ENCODE measurements at regions of chr1 and their contacts with region 1.

Region 1: DNA sequence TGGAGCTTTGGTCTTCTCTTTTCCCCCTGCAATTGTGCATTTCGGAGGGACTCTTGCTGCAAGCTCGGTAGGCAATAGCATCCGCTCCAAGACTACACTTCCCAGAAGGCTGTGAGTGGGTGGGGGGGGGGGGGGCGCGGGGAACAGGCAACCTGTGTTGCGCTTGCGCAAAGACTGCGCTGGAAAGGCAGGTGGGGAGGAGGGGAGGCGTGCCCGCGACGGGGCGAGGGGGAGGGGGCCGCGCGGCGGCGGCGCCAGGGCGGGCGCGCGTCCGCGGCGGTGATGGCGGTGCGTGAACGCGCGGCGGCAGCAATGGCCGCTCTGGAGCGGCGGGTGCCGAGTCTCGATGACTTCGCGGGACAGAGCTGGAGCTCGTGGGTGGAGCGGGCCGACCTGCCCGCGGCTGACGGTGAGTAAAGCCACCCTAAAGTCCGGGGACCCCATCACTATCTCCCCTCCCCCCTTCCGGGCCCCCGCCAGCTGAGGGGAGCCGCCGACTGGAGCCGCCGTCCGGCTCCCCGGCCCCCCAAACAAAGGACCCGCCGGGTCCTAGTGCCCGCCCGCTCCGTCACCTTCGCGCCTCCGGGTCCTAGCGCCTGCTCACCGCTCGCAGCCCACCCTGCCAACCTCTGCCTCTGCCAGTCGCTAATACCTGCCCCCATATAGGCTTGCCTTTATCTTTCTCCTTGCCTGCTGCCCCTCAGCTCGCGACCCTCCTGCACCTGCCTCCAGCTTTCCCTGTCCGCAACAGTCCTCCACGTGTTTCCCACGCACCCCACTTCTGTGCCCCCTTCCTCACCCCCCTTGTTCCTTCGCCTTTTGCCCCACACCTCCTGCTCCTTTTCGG is at the start of gene ATXN7L2:
- DNase-seq: peak; percentile 79
- H3K4me3 ChIP-seq: peak within 1 kb of the TSS; percentile 41 to 93 (median 68)
- H3K27ac ChIP-seq: peak within 1 kb of the TSS; percentile 42
- H3K4me1 ChIP-seq: peaks cover 13% of the 10 kb centered on the region
- H3K27me3 ChIP-seq: no peaks in the 10 kb centered on the region
- CTCF ChIP-seq: no peak
- total RNA-seq, gene ATXN7L2: 0.83 to 4.3 TPM

Region 2: DNA sequence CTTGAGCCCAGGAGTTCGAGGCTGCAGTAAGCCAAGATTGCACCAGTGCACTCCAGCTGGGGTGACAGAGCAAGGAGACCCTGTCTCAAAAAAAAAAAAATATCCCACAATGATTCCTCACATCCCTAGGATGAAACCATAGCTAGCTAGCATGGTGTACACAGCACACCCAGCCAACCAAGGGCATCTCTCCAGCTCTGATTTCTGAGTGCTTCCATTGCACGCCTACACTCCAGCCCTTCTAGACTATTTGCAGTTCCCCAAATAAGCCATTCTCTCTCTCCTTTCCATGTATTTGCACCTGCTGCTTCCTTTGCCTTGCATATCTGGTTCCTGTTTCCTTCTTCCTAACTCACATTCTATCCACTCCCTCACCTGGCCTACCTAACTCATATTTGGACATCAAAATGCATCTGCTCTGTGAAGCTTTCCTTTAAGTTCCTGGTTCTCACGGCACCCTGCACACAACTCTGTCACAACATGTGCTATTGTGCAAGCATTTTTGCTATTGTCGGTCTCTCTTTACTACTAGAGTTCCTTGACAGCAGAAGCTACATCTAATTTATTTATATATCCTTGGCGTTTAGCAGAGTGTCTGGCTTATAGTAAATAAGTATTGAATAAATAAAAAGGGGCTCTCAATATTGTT is 372.4 kb before region 1 on chr1:
- CTCF ChIA-PET with region 1: no interaction called
- dilution Hi-C with region 1: no loop called
- in situ Hi-C with region 1: no loop called
- intact Hi-C with region 1: no loop called
- DNase-seq: no peak
- H3K4me3 ChIP-seq: no peak overlapping the region
- H3K27ac ChIP-seq: no peak overlapping the region
- H3K4me1 ChIP-seq: peaks cover 12% of the 10 kb centered on the region
- H3K27me3 ChIP-seq: peaks cover 2% of the 10 kb centered on the region
- CTCF ChIP-seq: no peak

Region 3: GRCh38 chr1:109385417-109385816 is 98.5 kb before region 1 on chr1:
- CTCF ChIA-PET with region 1: no interaction called
- dilution Hi-C with region 1: no loop called
- in situ Hi-C with region 1: no loop called
- intact Hi-C with region 1: no loop called
- DNase-seq: no peak
- H3K4me3 ChIP-seq: no peak overlapping the region
- H3K27ac ChIP-seq: no peak overlapping the region
- H3K4me1 ChIP-seq: no peaks in the 10 kb centered on the region
- H3K27me3 ChIP-seq: no peaks in the 10 kb centered on the region
- CTCF ChIP-seq: no peak

Region 4: DNA sequence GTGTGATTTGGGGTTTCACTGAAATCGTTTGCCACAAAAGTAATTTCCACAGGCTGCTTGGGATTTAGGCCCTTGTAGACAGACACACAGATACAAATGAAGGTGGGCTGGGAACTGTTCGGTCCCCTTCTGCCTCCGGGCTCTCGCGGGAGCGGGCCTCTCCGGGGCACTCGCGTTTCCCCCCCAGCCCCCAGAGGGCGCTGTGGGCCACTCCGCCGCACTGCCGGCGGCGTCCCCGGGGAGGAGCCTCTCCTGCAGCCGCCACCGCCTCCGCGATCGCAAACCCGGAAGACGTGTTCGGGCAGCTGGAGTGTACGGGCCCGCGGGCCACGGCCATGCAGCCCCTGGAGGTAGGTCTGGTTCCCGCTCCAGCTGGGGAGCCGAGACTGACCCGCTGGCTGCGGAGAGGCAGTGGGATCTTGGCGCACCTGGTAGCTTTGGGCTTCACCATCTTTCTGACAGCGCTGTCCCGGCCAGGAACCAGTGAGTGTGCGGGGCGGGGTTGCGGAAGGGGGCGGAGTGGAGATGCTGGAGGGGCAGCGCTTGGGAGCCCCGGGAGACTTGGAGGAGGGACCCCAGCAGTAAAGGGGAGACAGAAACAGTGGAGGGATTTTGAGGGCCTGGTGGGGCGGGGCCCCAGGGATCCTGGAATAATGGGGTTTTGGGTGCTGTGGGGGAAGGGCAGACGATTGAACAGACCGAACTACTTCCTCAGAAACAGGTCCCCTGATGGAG is 10.1 kb after region 1 on chr1 and contains the start of gene CYB561D1:
- CTCF ChIA-PET with region 1: no interaction called
- dilution Hi-C with region 1: no loop called
- in situ Hi-C with region 1: no loop called
- intact Hi-C with region 1: loop called (anchors 1 kb)
- DNase-seq: peak; percentile 80
- H3K4me3 ChIP-seq: peak within 1 kb of the TSS; percentile 93 to 98 (median 94)
- H3K27ac ChIP-seq: no peak within 1 kb of the TSS
- H3K4me1 ChIP-seq: peaks cover 4% of the 10 kb centered on the region
- H3K27me3 ChIP-seq: no peaks in the 10 kb centered on the region
- CTCF ChIP-seq: peak; percentile 58 to 95
- total RNA-seq, gene CYB561D1: 7.3 to 7.7 TPM

Measured in mammary epithelial cell (primary cell).